Activated CD4-positive, alpha-beta memory T cell treated with anti-CD3 and anti-CD28 coated beads, Interleukin-2, amount 10 ng/mL, durations not matched to agents 7 days and 5 days (primary cell): ENCODE measurements at regions of chr21 and their contacts with region 1.

Region 1: GRCh38 chr21:33229784-33230544 is at the start of gene IFNAR2:
- DNase-seq: peak; percentile 78
- H3K4me3 Mint-ChIP-seq: peak within 1 kb of the TSS; percentile 82
- H3K27ac Mint-ChIP-seq: peak within 1 kb of the TSS; percentile 92
- H3K4me1 Mint-ChIP-seq: peaks cover 42% of the 10 kb centered on the region
- H3K27me3 Mint-ChIP-seq: no peaks in the 10 kb centered on the region
- total RNA-seq, gene IFNAR2: 60.1 to 61.9 TPM

Region 2: DNA sequence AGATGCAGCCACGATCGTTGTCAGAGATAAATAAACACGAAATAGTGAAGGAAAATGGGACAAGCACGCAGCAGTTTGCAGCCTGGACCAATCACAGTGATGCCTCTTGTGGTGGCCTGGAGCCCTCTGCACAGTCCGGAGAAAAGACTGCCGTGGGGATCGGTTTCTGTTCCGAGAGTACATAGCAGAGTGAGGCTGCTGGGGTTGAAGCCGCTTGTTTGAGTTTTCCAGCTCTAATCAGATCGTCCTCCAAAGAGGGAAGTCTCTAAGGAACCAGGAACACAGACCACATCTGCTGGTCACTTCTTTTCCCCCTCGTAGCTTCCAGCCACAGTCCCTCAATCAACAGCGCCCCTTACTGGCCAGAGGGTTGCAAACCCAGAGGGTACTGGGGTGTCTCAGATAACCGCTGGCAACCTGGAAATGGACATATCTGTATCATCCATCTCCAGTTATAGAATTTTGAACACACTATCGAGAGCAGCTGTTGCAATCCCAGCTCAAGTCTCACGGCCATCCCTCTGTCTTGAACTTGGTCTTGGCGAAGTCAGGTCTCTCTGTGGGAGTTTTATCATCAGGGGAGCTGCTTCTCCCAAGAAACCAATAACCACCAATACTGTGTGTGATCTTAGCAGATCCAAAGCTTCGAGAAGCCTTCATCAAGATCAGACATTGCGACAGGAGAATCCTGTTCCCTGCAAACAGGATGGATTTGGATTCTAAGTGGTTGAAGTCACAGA is 102.6 kb before region 1 on chr21:
- CTCF ChIA-PET with region 1: no interaction called
- POLR2A ChIA-PET with region 1: no interaction called
- DNase-seq: peak; percentile 67
- H3K4me3 Mint-ChIP-seq: peak overlapping the region; percentile 31
- H3K27ac Mint-ChIP-seq: no peak overlapping the region
- H3K4me1 Mint-ChIP-seq: peaks cover 3% of the 10 kb centered on the region
- H3K27me3 Mint-ChIP-seq: peaks cover 24% of the 10 kb centered on the region

Region 3: GRCh38 chr21:33219954-33220353 is 10.0 kb before region 1 on chr21:
- CTCF ChIA-PET with region 1: interaction called, 3 read pairs
- POLR2A ChIA-PET with region 1: interaction called, 10 read pairs
- DNase-seq: no peak
- H3K4me3 Mint-ChIP-seq: no peak overlapping the region
- H3K27ac Mint-ChIP-seq: no peak overlapping the region
- H3K4me1 Mint-ChIP-seq: peaks cover 42% of the 10 kb centered on the region
- H3K27me3 Mint-ChIP-seq: peaks cover 8% of the 10 kb centered on the region

Region 4: DNA sequence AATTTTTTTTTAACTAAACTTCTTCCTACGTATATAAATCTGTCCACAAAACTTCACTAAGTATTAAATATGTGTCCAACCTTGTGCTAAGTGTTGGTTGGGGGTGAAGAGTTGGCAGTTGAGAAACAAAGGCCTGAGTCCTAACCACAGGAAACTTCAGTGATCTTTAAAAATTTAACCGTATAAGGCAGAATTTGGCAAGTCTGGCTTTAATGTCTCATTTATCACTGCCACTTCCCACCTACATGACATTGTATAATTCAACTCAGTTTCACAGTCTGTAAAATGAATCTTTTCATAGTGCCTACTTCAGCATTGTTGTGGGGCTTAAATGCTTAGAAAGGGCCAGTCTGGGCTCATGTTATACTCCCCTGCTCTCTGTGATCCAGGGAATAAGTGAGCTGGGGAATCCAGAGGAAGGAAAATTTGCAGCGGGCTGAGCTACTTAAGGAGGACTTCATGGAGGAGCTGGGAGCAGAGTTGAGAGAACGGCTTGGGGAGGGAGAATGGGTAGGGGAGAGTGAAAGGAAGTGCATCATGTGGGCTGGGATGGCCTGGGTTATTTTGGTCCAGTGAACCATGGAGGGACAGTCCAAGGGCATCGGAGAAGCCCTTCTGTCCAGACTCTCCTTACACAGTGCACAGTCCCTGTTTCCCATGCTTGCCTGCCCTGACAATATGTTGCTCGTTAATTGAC is 14.3 kb after region 1 on chr21:
- CTCF ChIA-PET with region 1: no interaction called
- POLR2A ChIA-PET with region 1: interaction called, 24 read pairs
- DNase-seq: peak; percentile 12
- H3K4me3 Mint-ChIP-seq: peak overlapping the region; percentile 29
- H3K27ac Mint-ChIP-seq: peak overlapping the region; percentile 86
- H3K4me1 Mint-ChIP-seq: peaks cover 71% of the 10 kb centered on the region
- H3K27me3 Mint-ChIP-seq: no peaks in the 10 kb centered on the region